Endothelial cell of umbilical vein (primary cell): ENCODE measurements at regions of chr3 and their contacts with region 1.

Region 1: DNA sequence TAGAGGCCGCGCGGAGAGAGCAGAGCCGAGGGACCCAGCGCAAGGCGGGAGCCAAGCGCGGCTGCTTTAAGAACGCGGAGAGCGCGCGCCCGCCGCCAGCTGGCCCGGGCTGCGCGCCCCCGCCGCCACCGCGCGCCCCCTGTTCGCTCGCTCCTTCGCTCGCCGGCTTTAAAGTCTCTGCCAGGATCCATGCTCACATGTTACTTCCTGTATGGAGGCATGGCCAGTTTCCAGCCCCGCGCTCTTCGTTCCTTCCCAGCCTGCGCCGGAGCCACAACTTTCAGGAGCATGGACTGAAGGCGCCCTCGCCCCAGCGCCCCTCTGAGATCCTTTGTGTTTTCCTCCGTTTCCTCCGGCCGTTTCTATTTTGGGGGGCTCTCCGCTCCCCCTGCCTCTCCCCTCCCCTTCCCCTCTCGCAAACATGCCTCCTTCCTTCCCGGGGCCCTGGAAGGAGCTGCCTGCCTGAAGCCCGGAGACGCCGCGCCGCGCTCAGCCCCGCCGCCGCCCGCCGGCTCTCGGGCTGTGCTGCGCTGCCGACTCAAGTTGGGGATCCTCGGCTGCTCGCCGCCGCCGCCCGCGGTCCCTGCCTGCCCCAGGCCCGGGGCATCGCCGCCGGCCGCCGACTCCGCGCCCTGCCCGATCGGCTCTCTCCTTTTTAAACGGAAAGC is at the start of gene PTPRG:
- DNase-seq: peak; percentile 95
- H3K4me3 ChIP-seq: peak within 1 kb of the TSS; percentile 64 to 93 (median 82)
- H3K27ac ChIP-seq: peak within 1 kb of the TSS; percentile 76
- H3K4me1 ChIP-seq: peaks cover 30% of the 10 kb centered on the region
- H3K27me3 ChIP-seq: no peaks in the 10 kb centered on the region
- CTCF ChIP-seq: no peak
- POLR2A ChIP-seq: peak; percentile 92
- total RNA-seq, gene PTPRG: 37.5 and 39.1 TPM in 2 replicates

Region 2: GRCh38 chr3:61251174-61251972 is 310.1 kb before region 1 on chr3 and contains the start of gene FHIT:
- CTCF ChIA-PET with region 1: no interaction called
- POLR2A ChIA-PET with region 1: no interaction called
- dilution Hi-C with region 1: no loop called
- intact Hi-C with region 1: loop called (anchors 5 kb)
- DNase-seq: peak; percentile 95
- H3K4me3 ChIP-seq: peak within 1 kb of the TSS; percentile 62 to 99 (median 94)
- H3K27ac ChIP-seq: peak within 1 kb of the TSS; percentile 65
- H3K4me1 ChIP-seq: peaks cover 31% of the 10 kb centered on the region
- H3K27me3 ChIP-seq: no peaks in the 10 kb centered on the region
- CTCF ChIP-seq: no peak
- POLR2A ChIP-seq: no peak
- total RNA-seq, gene FHIT: 2.2 and 3.1 TPM in 2 replicates

Region 3: DNA sequence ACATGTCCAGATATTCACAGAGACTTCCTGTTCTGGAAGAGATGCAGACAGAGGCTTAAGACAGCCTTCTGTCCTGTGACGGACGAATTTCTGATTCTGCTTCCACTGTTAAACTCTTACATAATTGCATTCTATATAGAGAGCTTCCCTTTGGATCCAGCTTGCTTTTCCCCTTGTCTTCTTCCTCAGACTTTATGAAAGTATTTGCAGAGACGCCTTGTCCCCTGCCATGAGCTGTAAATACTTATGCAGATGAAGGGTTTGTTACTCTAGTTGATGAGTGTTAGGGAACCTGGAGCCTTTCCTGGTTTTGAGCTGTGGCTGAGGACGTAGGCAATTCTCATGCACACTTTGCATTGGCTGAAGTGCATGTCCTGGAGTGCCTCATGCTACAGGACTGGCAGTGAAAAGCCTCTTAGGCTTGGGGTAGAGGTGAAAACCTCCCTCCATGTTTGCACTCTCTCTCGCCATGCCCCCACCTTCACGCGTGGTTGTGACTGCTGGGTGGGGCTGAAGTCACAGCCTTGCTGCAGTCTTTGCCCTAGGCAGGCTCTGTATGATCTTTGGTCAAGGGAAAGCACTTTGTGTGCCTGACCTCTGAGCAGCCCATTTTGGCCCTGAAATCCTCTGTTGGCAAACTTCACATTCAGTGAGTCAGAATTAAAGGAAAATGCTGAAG is 286.4 kb after region 1 on chr3:
- CTCF ChIA-PET with region 1: interaction called, 8 read pairs
- POLR2A ChIA-PET with region 1: no interaction called
- dilution Hi-C with region 1: no loop called
- intact Hi-C with region 1: loop called (anchors 2 kb)
- DNase-seq: peak; percentile 50
- H3K4me3 ChIP-seq: no peak overlapping the region
- H3K27ac ChIP-seq: no peak overlapping the region
- H3K4me1 ChIP-seq: peaks cover 25% of the 10 kb centered on the region
- H3K27me3 ChIP-seq: no peaks in the 10 kb centered on the region
- CTCF ChIP-seq: no peak
- POLR2A ChIP-seq: no peak

Region 4: GRCh38 chr3:61927332-61927731 is 365.8 kb after region 1 on chr3:
- CTCF ChIA-PET with region 1: no interaction called
- POLR2A ChIA-PET with region 1: no interaction called
- dilution Hi-C with region 1: no loop called
- intact Hi-C with region 1: loop called (anchors 2 kb)
- DNase-seq: peak; percentile 41
- H3K4me3 ChIP-seq: no peak overlapping the region
- H3K27ac ChIP-seq: no peak overlapping the region
- H3K4me1 ChIP-seq: peaks cover 11% of the 10 kb centered on the region
- H3K27me3 ChIP-seq: no peaks in the 10 kb centered on the region
- CTCF ChIP-seq: no peak
- POLR2A ChIP-seq: no peak

Region 5: DNA sequence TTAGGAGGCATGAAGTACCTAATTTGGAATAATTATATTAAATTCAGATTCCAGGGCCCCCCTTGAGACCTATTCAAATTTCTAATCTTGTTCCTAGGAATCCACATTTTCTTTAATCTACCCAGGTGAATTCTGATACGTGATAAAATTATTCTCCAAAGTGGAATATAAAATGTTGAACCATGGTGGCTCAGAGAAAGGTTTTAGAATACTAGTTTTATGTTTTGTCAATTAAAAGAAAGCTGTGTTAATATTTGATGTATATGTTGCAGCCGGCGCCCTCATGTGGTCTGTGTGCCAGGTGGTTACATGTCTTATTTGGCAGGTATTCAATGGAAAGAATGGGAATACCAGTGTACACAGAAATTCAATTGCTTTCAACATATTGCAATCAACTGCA is 490.0 kb after region 1 on chr3:
- CTCF ChIA-PET with region 1: interaction called, 30 read pairs
- POLR2A ChIA-PET with region 1: no interaction called
- dilution Hi-C with region 1: no loop called
- intact Hi-C with region 1: loop called (anchors 1 kb)
- DNase-seq: peak; percentile 61
- H3K4me3 ChIP-seq: no peak overlapping the region
- H3K27ac ChIP-seq: no peak overlapping the region
- H3K4me1 ChIP-seq: no peaks in the 10 kb centered on the region
- H3K27me3 ChIP-seq: no peaks in the 10 kb centered on the region
- CTCF ChIP-seq: peak; percentile 44 to 45
- POLR2A ChIP-seq: no peak

Region 6: GRCh38 chr3:62188681-62189383 is 627.3 kb after region 1 on chr3:
- CTCF ChIA-PET with region 1: interaction called, 182 read pairs
- POLR2A ChIA-PET with region 1: interaction called, 3 read pairs
- dilution Hi-C with region 1: no loop called
- intact Hi-C with region 1: loop called (anchors 1 kb)
- DNase-seq: peak; percentile 80
- H3K4me3 ChIP-seq: no peak overlapping the region
- H3K27ac ChIP-seq: no peak overlapping the region
- H3K4me1 ChIP-seq: peaks cover 5% of the 10 kb centered on the region
- H3K27me3 ChIP-seq: no peaks in the 10 kb centered on the region
- CTCF ChIP-seq: peak; percentile 75 to 84
- POLR2A ChIP-seq: no peak